ENCODE measurements at regions of chr9 and their contacts with region 1.

Region 1: GRCh38 chr9:126965541-126966428 is 51.2 kb downstream of the RALGPS1 start:
- DNase-seq: peak; percentile 65
- H3K4me3 Mint-ChIP-seq: no peak overlapping the region
- H3K27ac Mint-ChIP-seq: no peak overlapping the region
- H3K4me1 Mint-ChIP-seq: no peaks in the 10 kb centered on the region
- H3K27me3 Mint-ChIP-seq: peaks cover 4% of the 10 kb centered on the region

Region 2: GRCh38 chr9:127199001-127199791 is 233.4 kb after region 1 on chr9:
- CTCF ChIA-PET with region 1: interaction called, 33 read pairs
- POLR2A ChIA-PET with region 1: no interaction called
- intact Hi-C with region 1: loop called (anchors 1 kb)
- DNase-seq: peak; percentile 86
- H3K4me3 Mint-ChIP-seq: no peak overlapping the region
- H3K27ac Mint-ChIP-seq: peak overlapping the region; percentile 8
- H3K4me1 Mint-ChIP-seq: peaks cover 7% of the 10 kb centered on the region
- H3K27me3 Mint-ChIP-seq: no peaks in the 10 kb centered on the region

Measured in activated CD4-positive, alpha-beta memory T cell treated with anti-CD3 and anti-CD28 coated beads for 36 hours (primary cell).